ENCODE measurements at regions of chr3 and their contacts with region 1.

Region 1: DNA sequence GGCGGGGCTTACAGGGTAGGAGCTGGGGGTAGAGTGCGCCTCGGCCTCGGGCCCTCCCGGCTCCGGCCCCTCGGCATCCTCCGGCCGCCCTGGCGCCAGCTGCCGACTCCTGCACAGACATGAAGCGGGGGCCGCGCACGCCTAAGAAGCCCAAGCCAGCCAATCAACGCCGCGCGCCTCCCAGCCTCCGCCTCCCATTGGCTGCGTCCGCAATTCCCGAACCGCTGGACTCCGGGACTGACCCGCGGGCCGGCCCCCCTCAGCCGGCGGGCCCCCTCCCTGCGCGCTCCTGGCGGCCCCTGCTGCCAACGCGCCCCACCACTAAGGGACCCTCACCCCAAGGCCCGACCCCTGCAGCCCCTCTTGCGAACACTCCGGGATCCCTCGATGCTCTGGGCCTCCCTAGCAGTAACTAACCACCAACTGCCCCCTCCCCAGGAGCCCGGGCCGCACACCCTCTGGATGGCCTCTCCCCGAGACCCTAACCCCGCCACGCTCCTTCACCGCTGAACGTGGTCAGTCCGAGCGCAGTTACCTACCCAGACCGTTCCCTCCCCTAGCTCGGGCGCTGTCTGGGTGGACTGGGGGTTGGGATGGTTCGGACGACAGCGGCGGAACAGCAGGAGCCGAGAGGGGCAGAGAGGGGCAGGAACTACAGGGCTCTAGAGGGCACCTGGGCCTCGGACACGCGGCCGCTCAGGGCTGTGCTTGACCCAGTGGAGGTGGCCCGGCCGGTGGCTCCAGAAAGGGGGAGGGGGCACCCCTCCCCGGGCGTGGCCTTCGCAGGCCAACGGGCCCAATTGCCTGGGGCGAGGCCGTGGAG is 5.0 kb downstream of the GATA2 start:
- DNase-seq: peak; percentile 56 to 58
- ATAC-seq: peak; percentile 58 to 61
- H3K4me3 ChIP-seq: peak overlapping the region; percentile 66 to 85 (median 68)
- H3K27ac ChIP-seq: peak overlapping the region; percentile 67 to 81 (median 78)
- H3K4me1 ChIP-seq: peaks cover 22 to 49% of the 10 kb centered on the region in 2 donors
- H3K27me3 ChIP-seq: peaks cover 88 to 100% (median 95%) of the 10 kb centered on the region in 3 donors
- CTCF ChIP-seq: no peak
- POLR2A ChIP-seq: peak; percentile 58 to 82

Region 2: GRCh38 chr3:128473180-128473519 is 14.9 kb before region 1 on chr3:
- in situ Hi-C with region 1: no loop called
- intact Hi-C with region 1: no loop called
- DNase-seq: no peak
- ATAC-seq: no peak
- H3K4me3 ChIP-seq: no peak overlapping the region
- H3K27ac ChIP-seq: no peak overlapping the region
- H3K4me1 ChIP-seq: no peaks in the 10 kb centered on the region
- H3K27me3 ChIP-seq: peaks cover 0 to 6% (median 3%) of the 10 kb centered on the region in 3 donors
- CTCF ChIP-seq: no peak
- POLR2A ChIP-seq: no peak

Region 3: GRCh38 chr3:128572644-128573105 is 84.7 kb after region 1 on chr3:
- in situ Hi-C with region 1: no loop called
- intact Hi-C with region 1: loop called (anchors 10 kb)
- DNase-seq: no peak
- ATAC-seq: no peak
- H3K4me3 ChIP-seq: no peak overlapping the region
- H3K27ac ChIP-seq: no peak overlapping the region
- H3K4me1 ChIP-seq: no peaks in the 10 kb centered on the region
- H3K27me3 ChIP-seq: peaks cover 0 to 4% (median 0%) of the 10 kb centered on the region in 3 donors
- CTCF ChIP-seq: no peak
- POLR2A ChIP-seq: no peak

Region 4: GRCh38 chr3:128603811-128604775 is 116.1 kb after region 1 on chr3:
- in situ Hi-C with region 1: no loop called
- intact Hi-C with region 1: loop called (anchors 5 kb)
- DNase-seq: no peak
- ATAC-seq: no peak
- H3K4me3 ChIP-seq: no peak overlapping the region
- H3K27ac ChIP-seq: no peak overlapping the region
- H3K4me1 ChIP-seq: peaks cover 7 to 13% of the 10 kb centered on the region in 2 donors
- H3K27me3 ChIP-seq: no peaks in the 10 kb centered on the region
- CTCF ChIP-seq: no peak
- POLR2A ChIP-seq: no peak